Ascending aorta (tissue), 2 donors: ENCODE measurements at regions of chr1 and their contacts with region 1.

Region 1: DNA sequence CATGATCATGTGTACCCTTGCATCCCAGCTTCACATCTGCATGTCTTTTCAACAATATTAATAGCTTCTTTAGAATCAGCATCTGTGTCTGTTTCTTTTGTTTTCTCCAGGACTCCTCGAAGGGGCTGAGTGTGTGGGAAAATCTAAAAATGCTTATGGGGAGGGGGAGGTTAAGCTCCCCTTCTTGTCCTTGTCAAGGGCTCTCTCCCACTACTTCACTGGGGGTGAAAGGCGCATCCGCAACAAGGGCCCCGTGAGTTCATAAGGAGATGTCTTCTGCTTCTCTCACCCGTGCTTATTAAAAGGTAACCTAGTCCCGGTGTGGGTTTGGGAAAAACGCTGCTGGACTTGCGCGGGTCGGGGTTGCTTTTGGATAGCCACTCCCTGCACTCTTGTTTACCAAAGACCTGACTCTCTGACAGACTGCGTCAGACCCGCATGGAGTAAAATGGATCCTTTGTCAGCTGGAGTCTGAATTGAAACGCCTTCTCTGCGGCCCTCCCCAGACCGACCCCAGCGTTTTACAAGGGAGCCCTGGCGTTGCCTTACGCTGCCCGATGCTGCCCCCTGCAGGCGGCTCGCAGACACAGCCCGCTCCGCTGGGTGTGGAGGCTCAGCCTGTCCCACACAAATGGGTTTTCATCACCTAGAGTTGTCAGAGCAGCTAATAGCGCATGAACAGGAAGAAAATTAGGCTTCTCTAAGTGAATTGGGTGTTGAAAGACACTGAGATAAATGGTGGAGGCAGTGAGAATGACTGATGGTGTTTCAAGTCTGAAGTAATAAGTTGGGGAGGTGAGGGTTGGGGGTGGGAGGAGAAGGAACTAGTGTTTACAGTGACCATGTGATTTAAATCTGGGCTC is 53.8 kb downstream of the IER5 start:
- DNase-seq: peak; percentile 56 to 93
- H3K4me3 ChIP-seq: peak overlapping the region in 1 of 2 donors; percentile 58
- H3K27ac ChIP-seq: peak overlapping the region; percentile 82 to 83
- H3K4me1 ChIP-seq: peaks cover 14 to 20% of the 10 kb centered on the region in 2 donors
- H3K27me3 ChIP-seq: no peaks in the 10 kb centered on the region
- CTCF ChIP-seq: peak; percentile 91 to 98 (median 98)

Region 2: GRCh38 chr1:180912801-180913565 is 229.3 kb before region 1 on chr1 and contains the start of gene KIAA1614:
- intact Hi-C with region 1: loop called (anchors 5 kb)
- DNase-seq: peak in 1 of 2 donors; percentile 66
- H3K4me3 ChIP-seq: peak within 1 kb of the TSS; percentile 62 to 88
- H3K27ac ChIP-seq: peak within 1 kb of the TSS; percentile 86 to 97
- H3K4me1 ChIP-seq: peaks cover 0 to 8% of the 10 kb centered on the region in 2 donors
- H3K27me3 ChIP-seq: no peaks in the 10 kb centered on the region
- CTCF ChIP-seq: no peak
- total RNA-seq, gene KIAA1614: 21.9 TPM

Region 3: DNA sequence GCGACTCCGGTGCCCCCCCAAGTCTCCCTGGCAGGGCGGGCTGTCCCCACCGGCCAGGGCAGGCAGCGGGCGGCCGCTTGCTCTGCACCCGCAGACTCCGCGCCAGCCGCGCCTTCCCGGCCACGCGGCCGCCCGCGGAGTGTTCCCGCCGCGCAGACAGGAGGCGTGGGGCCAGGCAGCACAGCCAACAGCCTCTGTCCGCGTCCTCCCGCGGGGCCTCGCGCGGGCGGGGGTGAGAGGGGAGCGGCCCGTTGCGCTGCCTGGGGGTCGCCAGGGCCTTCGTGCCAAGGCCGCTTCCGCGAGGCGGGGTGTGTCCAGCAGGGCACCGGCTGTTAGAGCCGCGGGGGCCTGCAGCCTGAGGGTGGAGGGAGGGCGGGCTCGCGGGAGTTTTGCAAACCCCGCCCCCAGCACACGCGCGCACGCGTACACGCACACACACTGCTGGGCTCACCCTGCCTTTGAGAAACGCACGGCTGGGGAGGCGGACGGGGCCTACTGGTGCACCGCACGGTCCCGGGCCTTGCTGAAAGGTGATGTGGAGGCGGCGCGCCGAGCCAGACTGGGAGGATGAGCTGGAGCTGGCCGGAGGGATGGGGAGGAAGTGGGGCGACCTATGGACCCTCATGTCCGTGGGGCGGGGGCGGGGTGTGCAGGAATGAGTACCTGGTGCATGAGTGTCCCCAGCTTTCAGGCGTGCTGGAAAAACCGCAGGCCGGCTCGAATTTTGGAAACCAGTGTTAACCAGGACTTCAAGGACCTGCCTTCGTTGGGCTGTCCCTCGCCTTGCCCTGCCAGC is 188.1 kb before region 1 on chr1:
- intact Hi-C with region 1: loop called (anchors 5 kb)
- DNase-seq: peak in 1 of 2 donors; percentile 76
- H3K4me3 ChIP-seq: peak overlapping the region; percentile 68 to 71
- H3K27ac ChIP-seq: peak overlapping the region; percentile 28 to 47
- H3K4me1 ChIP-seq: peaks cover 3 to 8% of the 10 kb centered on the region in 2 donors
- H3K27me3 ChIP-seq: no peaks in the 10 kb centered on the region
- CTCF ChIP-seq: peak in 2 of 3 experiments; percentile 19 to 29

Region 4: DNA sequence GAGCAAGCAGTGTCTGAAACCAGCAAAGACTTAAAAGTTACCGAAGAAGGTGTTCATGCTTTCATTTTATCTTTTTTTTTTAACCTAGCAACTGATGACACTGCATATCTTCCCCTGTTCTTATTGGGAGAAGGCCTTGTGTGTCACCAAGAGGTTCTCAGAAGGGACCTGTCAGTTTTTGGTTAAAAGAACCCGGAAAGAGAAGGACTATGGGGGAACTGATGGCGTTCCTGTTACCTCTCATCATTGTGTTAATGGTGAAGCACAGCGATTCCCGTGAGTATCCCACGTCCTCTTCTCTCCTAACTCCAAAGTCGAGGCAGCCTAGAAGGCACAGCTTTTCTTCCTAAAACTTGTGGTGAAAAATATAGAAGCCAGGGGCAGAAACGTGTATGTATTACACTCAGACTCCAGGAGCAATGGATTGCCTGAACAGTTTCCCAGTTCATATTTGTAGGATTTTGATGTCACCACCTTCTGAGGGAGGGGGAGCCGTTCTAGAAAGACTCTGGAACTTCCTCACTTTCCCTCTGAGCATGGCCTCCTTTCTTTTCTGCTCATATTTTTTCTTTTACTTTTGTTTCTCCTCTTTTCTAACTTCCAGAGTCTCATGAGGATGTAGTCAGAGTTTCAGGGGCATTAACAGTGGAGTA is 108.4 kb before region 1 on chr1 and contains the start of gene MR1:
- intact Hi-C with region 1: loop called (anchors 2 kb)
- DNase-seq: peak in 1 of 2 donors; percentile 68
- H3K4me3 ChIP-seq: peak within 1 kb of the TSS; percentile 46 to 67
- H3K27ac ChIP-seq: peak within 1 kb of the TSS; percentile 94 to 96
- H3K4me1 ChIP-seq: peaks cover 0 to 28% of the 10 kb centered on the region in 2 donors
- H3K27me3 ChIP-seq: no peaks in the 10 kb centered on the region
- CTCF ChIP-seq: no peak
- total RNA-seq, gene MR1: 19.2 TPM

Region 5: DNA sequence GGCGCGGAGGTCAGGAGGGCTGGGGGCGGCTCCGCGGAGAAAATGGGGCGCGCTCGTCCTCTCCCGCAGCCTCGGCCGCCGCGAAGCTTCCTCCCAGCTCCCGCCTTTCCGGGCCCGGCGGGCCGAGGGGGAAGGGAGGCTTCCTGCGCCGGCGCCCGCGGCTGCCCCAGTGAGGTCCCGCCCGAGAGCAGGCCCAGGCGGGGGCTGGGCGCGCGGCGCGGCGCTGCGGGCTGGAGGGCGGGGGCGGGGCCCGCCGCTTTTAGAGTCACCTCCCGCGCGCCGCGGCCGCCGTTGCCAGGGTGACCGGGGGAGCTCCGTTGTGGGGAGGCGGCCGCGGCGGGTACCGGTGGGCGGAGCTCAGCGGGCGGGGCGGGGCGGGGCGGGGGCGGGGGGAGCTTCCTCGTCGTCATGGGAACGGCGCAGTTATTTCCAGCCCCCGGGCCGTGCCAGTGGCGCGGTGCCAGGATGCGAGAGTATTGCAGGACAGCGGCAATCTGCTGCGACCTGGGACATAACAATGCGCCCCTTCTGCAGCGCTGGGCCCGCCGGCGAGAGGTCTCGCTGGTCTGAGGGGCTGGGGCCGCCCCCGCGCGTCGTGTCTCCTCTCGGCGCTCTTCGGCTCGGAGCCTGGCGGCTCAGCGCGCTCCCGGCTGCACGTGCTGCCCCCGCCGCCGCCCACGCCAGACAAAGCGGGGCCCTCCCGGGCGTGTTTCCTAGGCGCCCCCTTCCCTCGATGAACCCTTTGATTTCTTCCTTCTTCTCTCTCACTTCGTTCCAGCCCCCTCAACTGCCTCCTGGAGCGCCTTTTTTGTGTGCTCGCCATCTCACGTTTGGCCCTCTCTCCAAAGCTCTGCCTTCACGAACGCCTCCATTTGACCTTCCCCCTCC is 36.9 kb before region 1 on chr1:
- intact Hi-C with region 1: loop called (anchors 2 kb)
- DNase-seq: peak; percentile 85 to 98
- H3K4me3 ChIP-seq: peak overlapping the region; percentile 90 to 98
- H3K27ac ChIP-seq: peak overlapping the region; percentile 91 to 92
- H3K4me1 ChIP-seq: peaks cover 3 to 19% of the 10 kb centered on the region in 2 donors
- H3K27me3 ChIP-seq: no peaks in the 10 kb centered on the region
- CTCF ChIP-seq: no peak

Region 6: DNA sequence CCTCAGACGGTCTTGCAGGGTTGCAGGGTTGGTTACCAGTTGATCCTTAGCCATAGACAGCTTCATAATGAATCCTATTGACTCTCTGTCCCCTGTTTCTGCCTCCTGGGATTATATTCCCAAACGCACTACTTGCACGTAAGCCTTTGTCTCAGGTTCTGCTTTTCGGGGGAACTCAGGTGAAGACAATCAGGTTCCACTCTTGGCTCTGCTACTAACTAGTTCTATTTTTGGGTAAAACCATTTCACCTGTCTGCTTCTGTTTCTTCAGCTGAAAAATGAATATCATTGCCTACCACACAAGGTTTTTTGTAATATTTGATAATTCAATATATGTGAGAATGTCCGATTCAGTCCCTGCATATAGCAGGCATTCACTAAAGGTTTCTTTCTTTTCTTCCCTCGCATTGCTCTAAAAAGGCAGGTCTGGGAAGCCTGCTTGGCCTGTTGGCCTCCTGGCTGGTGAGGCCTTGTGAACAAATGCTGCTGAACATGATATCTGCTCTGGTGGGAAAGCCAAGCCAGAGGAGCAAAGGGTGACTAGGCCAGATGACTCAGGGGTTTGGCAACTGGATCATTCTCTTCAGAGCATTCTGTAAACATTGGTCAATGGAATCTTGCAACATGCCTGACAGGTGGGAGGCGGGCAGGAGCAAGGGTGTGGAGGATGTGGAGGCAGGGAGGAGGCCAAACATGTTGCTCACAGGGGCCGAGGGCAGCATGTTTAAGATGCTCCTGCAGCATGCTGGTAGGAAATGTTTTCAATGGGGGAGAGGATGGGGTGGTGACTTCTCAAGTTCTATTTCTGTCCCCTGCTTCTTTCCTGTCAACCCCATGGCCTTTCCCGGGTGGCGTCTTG is 30.0 kb before region 1 on chr1:
- intact Hi-C with region 1: loop called (anchors 2 kb)
- DNase-seq: peak; percentile 57 to 95
- H3K4me3 ChIP-seq: no peak overlapping the region
- H3K27ac ChIP-seq: peak overlapping the region; percentile 50 to 60
- H3K4me1 ChIP-seq: peaks cover 0 to 14% of the 10 kb centered on the region in 2 donors
- H3K27me3 ChIP-seq: no peaks in the 10 kb centered on the region
- CTCF ChIP-seq: no peak

Region 7: GRCh38 chr1:181166377-181167196 is 24.3 kb after region 1 on chr1:
- intact Hi-C with region 1: loop called (anchors 2 kb)
- DNase-seq: peak in 1 of 2 donors; percentile 83
- H3K4me3 ChIP-seq: no peak overlapping the region
- H3K27ac ChIP-seq: no peak overlapping the region
- H3K4me1 ChIP-seq: peaks cover 0 to 2% of the 10 kb centered on the region in 2 donors
- H3K27me3 ChIP-seq: no peaks in the 10 kb centered on the region
- CTCF ChIP-seq: peak; percentile 83 to 85 (median 84)

Region 8: GRCh38 chr1:181630838-181631237 is 488.5 kb after region 1 on chr1:
- intact Hi-C with region 1: no loop called
- DNase-seq: no peak
- H3K4me3 ChIP-seq: no peak overlapping the region
- H3K27ac ChIP-seq: no peak overlapping the region
- H3K4me1 ChIP-seq: no peaks in the 10 kb centered on the region
- H3K27me3 ChIP-seq: no peaks in the 10 kb centered on the region
- CTCF ChIP-seq: no peak